ENCODE measurements at regions of chr6 and their contacts with region 1.

Region 1: DNA sequence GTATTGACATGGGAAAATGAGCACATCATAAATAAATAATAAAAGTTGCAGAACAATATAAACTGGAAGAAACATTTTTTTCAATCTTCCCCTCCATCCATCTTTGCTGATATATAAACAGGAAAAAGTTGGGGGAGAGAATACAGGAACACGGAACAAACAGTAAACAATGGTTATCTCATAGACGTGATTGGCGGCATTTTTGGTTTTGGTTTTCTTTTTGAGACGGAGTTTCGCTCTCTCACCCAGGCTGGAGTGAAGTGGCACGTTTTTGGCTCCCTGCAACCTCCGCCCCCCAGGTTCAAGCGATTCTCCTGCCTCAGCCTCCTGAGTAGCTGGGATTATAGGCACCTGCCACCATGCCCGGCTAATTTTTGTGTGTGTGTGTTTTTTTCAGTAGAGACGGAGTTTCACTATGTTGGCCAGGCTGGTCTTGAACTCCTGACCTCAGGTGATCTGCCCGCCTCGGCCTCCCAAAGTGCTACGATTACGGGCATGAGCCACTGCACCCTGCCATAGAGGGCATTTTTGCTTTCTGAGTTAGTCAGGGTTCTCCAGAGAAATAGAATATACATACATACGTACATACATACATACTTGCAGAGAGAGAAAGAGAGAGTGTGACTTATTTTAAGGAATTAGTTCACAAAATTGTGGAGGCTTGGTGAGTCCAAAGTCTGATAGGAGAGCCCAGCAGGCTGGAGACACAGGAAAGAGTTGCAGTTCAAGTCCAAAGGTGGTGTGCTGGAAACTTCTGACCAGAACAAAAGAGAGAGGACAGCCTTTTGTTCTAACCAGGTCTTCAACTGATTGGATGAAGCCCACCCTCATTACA is 22.6 kb downstream of the GNL1 start:
- DNase-seq: no peak
- H3K27ac ChIP-seq: no peak overlapping the region
- CTCF ChIP-seq: no peak

Region 2: GRCh38 chr6:30493643-30494250 is 39.9 kb before region 1 on chr6:
- CTCF ChIA-PET with region 1: interaction called, 14 read pairs
- POLR2A ChIA-PET with region 1: no interaction called
- DNase-seq: no peak
- H3K27ac ChIP-seq: peak overlapping the region; percentile 33; the same call in 1 of the 2 replicates
- CTCF ChIP-seq: no peak